A549 (cell line): ENCODE measurements at regions of chr1 and their contacts with region 1.

Region 1: DNA sequence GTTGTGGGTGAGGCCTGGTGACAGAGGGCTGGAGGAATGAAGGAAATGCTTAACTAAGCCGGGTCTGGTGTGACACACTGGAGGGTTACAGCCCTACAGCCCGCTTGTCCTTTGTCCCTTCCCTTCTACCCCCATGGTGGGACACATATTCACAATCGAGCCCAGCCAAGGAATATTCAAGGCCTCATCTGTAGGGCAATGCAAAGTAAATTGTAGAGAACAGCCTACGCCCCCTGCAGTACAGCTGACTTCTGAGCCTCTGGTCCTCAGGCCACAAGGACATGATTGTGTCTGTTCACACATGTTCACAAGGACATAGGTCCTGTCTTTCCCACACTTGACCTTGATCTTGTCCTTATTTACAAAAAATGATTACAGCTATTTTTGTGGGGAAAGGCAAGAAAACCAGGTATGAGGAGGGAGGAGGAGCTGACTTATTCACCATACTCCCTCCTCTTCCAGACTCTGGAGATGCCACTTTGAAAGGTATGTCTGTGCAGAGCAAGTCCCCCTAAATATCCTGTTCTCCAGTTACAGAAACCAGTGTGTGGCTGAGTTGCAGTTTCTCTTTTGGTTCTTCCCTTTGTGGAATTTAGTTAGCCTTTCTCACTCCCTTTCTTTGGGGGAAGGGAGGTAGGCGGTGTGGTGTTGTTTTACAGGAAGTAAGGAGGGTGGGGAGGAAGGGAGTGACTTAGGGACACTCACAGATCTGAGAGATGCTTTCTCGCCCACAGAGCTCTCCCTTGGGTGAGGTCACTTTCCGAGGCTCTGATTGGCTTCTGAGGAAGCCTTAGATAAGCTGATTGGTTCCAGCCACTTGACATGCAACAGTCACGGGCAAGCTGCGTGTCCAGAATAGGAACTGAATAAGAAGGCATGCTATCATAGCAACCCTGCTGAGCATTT is 14.6 kb downstream of the POLR3GL start:
- DNase-seq: peak in 1 of 2 experiments; percentile 82
- ATAC-seq: peak; percentile 58 to 75; a peak in 5 of 6 replicates
- H3K4me3 ChIP-seq: no peak overlapping the region
- H3K27ac ChIP-seq: peak overlapping the region; percentile 25 to 33; a peak in 4 of 6 replicates
- H3K4me1 ChIP-seq: peaks cover 10% of the 10 kb centered on the region; the same call in 2 of the 3 replicates
- CTCF ChIP-seq: no peak
- EP300 ChIP-seq: no peak
- POLR2A ChIP-seq: no peak
- RAD21 ChIP-seq: no peak

Region 2: DNA sequence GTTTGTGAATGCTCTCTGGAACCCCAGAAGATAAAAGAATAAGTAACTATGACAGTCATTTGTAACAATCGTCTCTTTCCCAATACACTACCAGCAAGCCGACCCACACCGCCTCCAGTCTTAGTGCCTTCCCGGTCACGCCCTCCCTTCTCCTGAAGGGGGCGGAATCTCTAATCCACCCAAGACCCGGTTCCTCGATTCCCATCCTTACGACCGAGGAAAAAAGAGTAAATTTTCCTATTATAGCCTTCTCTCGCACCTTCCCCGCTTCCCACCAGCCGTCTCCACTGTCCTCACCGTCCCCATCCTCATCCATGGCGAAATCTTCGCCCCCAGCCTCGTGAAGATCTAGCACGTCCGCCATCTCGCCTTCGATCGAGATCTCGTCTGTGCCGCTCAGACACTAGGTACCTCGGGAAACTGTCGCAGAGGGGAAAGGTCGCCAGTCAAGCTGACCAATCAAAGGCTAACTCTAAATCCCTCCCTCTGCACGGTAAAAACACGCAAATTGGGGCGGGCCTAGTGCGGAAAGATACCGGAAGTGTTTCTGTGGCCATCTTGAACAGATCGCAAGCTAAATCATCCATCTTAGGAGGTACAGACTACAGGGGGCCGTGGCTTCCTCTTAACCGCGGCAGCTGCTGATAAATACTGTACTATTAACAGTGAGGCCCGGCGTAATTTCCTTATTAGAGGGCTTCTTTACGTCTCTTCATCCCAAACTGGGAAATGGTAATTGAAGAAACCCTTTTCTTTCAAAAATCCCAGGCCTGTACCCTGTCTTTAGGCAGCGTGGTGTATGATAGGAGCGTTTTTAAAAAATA is 51.8 kb before region 1 on chr1 and contains the start of gene RBM8A:
- CTCF ChIA-PET with region 1: interaction called, 27 read pairs
- POLR2A ChIA-PET with region 1: interaction called, 4 read pairs
- DNase-seq: peak; percentile 86 to 99
- ATAC-seq: peak; percentile 98
- H3K4me3 ChIP-seq: peak within 1 kb of the TSS; percentile 84
- H3K27ac ChIP-seq: peak within 1 kb of the TSS; percentile 97
- H3K4me1 ChIP-seq: peaks cover 10% of the 10 kb centered on the region; the same call in 2 of the 3 replicates
- CTCF ChIP-seq: peak; percentile 60
- EP300 ChIP-seq: no peak
- POLR2A ChIP-seq: peak; percentile 92
- RAD21 ChIP-seq: peak; percentile 15 to 20; a peak in 1 of 5 replicates
- polyA plus RNA-seq, gene RBM8A: 152 and 281 TPM in 2 replicates

Region 3: DNA sequence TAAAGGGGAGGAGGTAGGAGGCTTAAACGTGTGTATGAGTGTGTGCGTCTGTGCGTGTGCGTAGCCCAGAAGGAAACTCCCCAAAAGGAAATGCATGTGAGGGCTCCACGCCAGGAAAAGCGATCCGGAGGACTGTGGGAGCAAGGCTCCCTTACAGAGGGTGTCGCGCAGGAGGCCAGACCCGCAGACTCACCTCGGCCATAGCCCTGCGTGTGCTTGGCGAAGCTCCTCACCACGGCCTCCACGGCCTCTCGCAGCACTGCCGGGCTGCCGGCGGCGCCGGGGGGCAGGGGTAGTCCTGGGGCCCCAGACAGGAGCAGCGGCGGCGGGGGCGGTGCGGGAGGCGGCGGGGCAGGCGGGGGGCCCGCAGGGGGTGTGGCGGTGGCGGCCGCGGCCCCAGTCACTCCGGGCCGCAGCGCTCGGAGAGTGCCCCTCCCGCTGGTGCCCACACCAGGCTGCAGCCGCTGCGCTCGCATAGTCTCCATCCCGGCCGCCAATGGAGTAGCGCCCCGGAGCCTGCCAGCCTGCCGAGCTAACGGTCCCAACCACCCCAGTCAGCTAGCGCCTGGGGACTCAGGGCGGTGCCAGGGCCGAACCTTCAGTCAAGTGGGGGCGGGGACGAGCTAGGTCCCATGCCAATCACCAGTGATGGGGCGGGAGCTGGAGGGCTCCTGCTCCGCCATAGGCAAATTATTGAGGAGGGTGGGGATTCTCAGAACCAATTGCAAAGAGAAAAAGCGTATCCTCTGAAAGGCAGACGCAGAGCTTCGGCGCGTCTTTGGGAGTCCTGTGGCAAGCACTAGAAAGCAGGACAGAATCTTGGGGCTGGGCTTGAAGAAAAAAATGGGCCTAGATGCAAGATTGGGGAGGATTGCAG is 21.4 kb before region 1 on chr1 and contains the start of gene LIX1L:
- CTCF ChIA-PET with region 1: interaction called, 110 read pairs
- POLR2A ChIA-PET with region 1: interaction called, 4 read pairs
- DNase-seq: peak; percentile 95 to 97
- ATAC-seq: peak; percentile 82 to 89
- H3K4me3 ChIP-seq: peak within 1 kb of the TSS; percentile 68
- H3K27ac ChIP-seq: peak within 1 kb of the TSS; percentile 91 to 97
- H3K4me1 ChIP-seq: peaks cover 42% of the 10 kb centered on the region
- CTCF ChIP-seq: no peak
- EP300 ChIP-seq: no peak
- POLR2A ChIP-seq: peak; percentile 66
- RAD21 ChIP-seq: no peak
- polyA plus RNA-seq, gene LIX1L: 33.0 and 35.8 TPM in 2 replicates

Region 4: DNA sequence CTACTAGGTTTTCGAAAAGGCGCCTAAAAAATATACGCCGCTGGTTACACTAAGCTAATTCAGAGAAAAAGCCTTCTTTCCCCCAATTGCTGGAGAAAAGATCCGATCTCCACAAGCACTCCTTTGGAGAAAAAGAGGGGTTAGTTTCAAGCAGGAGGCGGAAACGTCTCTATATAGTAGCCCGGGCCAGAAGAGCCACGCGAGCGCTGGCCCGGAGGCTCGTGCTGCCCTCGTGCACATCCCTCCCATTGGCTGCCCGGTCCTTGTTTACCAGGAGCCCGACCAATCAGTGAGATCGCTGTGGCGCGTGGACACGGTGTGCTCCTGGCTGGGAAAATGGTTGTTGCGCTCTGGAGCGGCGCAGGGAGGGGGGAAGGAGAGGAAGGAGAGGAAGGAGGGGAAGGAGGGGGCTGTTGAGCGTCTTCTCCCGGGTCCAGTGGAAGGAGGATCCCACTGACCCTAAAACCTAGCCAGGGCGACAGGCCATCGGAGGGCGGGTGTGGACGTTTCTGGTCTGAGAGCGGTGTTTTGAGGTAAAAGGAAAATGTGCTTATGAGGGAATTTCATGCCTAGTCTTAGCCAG is 17.4 kb after region 1 on chr1 and contains the start of gene TXNIP:
- CTCF ChIA-PET with region 1: interaction called, 566 read pairs
- POLR2A ChIA-PET with region 1: no interaction called
- DNase-seq: peak; percentile 87 to 99
- ATAC-seq: peak; percentile 100
- H3K4me3 ChIP-seq: peak within 1 kb of the TSS; percentile 42
- H3K27ac ChIP-seq: peak within 1 kb of the TSS; percentile 46 to 68; a peak in 4 of 6 replicates
- H3K4me1 ChIP-seq: peaks cover 7% of the 10 kb centered on the region; the same call in 1 of the 3 replicates
- CTCF ChIP-seq: no peak
- EP300 ChIP-seq: no peak
- POLR2A ChIP-seq: no peak
- RAD21 ChIP-seq: no peak
- polyA plus RNA-seq, gene TXNIP: 3.1 and 3.3 TPM in 2 replicates

Region 5: DNA sequence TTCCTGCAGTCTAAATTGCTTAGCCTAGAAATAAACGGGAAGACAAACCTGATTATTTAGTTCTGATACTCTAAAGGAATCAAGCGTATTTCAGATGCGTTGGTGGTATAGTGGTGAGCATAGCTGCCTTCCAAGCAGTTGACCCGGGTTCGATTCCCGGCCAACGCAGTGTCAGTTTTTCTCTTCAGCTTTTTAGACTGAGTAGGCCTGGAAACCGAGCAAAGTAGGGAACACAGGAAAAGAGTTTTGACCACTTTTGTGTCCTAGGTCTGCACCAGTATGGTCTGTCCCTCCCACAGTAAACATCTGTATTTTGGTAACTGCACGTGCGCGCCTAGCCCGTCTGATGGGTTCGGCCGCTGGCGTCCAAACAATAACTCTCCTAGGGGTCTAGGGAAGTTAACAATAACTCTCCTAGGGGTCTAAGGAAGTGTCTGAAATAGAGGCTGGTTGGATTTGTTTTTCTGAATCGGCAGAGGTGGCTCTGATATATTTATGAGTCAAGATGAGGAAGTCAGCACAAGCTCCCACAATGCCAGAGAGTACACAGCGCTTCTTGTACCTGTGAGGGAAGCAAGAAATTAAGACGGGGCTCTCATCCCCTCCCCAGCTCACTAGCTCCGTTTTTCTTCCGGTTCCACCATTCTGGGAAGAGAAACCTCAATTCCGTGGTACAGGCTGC is 58.0 kb after region 1 on chr1:
- CTCF ChIA-PET with region 1: interaction called, 15 read pairs
- POLR2A ChIA-PET with region 1: no interaction called
- DNase-seq: peak; percentile 64 to 89
- ATAC-seq: peak; percentile 55 to 66
- H3K4me3 ChIP-seq: peak overlapping the region; percentile 62
- H3K27ac ChIP-seq: peak overlapping the region; percentile 91 to 95
- H3K4me1 ChIP-seq: peaks cover 6% of the 10 kb centered on the region; the same call in 2 of the 3 replicates
- CTCF ChIP-seq: no peak
- EP300 ChIP-seq: no peak
- POLR2A ChIP-seq: no peak
- RAD21 ChIP-seq: no peak